Ascending aorta (tissue), 2 donors: ENCODE measurements at regions of chr2 and their contacts with region 1.

Region 1: GRCh38 chr2:120803764-120804335 is 68.2 kb downstream of the GLI2 start:
- DNase-seq: no peak
- H3K4me3 ChIP-seq: no peak overlapping the region
- H3K27ac ChIP-seq: peak overlapping the region; percentile 71 to 81
- H3K4me1 ChIP-seq: peaks cover 17 to 37% of the 10 kb centered on the region in 2 donors
- H3K27me3 ChIP-seq: no peaks in the 10 kb centered on the region
- CTCF ChIP-seq: no peak

Region 2: DNA sequence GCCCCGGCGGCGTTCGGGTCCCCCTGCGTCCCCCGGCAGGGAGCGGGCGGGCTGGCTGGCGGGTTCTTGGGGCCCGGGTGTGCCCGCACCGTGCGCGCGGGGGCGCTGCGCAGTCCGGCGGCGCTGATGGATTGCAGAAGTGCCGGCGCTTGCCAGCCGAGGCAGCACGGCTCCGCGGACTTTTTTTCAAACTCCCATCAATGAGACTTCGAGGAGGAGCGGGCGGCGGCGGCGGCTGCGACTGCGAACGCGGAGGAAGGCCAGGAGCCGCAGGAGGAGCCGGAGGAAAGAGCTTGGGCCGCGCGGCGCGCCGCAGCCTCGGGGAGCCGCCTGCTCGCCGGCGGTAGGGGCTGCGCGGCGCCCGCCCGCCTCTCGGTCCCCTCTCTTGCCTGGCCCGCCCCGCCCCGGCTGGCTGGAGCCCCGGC is 68.1 kb before region 1 on chr2 and contains the start of gene GLI2:
- intact Hi-C with region 1: loop called (anchors 2 kb)
- DNase-seq: peak in 1 of 2 donors; percentile 82
- H3K4me3 ChIP-seq: peak within 1 kb of the TSS; percentile 51 to 67
- H3K27ac ChIP-seq: peak within 1 kb of the TSS; percentile 74 to 85
- H3K4me1 ChIP-seq: peaks cover 0 to 11% of the 10 kb centered on the region in 2 donors
- H3K27me3 ChIP-seq: no peaks in the 10 kb centered on the region
- CTCF ChIP-seq: peak; percentile 63 to 73 (median 72)
- total RNA-seq, gene GLI2: 23.1 TPM